ENCODE measurements at regions of chr4 and their contacts with region 1.

Region 1: DNA sequence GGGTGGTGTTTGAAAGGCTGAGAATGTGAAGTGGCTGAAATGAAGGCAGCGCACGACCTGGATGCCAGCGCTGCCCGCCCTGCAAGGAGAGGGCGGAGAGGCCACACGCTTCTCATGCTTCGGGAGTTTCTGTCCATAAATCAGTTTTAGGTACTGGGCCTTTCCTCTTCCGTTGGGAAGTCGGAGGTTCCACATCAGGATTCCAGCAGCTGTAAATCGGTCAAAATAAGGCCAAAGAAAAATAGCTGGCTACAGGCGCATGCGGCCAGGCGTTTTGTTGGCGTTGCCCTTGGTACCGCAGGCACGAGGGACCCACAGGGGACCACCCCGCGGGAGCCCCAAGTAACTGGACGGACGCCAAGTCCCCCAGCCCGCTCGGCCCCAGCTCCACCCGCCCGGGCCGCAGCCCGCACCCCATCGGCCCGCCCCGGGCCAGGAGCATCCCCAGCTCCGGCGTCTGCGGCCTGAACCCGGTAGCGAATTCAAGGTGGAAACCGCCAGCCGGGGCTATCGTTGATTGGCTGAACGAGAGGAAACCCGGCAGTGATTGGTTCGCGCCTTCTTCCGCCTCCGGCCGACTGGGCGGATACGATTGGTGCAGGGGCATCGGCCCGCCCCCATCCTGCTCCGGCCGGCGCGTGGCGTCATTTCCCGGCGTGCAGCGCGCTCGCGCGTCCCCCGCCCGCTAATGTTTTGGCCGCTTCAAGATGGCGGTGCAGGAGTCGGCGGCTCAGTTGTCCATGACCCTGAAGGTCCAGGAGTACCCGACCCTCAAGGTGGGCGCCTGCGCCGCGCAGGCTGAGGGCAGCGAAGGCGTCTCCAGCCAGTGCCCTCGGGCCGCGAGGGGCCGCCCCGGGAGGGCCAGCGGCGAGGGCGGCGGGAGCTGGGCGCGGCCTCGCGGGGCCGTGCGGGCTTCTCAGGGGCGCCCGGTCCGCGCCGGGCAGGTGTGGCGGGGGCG is at the start of gene MAEA:
- DNase-seq: peak; percentile 97 to 98
- ATAC-seq: peak; percentile 98 to 99 (median 99)
- H3K4me3 ChIP-seq: peak within 1 kb of the TSS; percentile 98
- H3K27ac ChIP-seq: peak within 1 kb of the TSS; percentile 95
- H3K4me1 ChIP-seq: peaks cover 26% of the 10 kb centered on the region
- H3K27me3 ChIP-seq: no peaks in the 10 kb centered on the region
- CTCF ChIP-seq: no peak
- total RNA-seq, gene MAEA: 26.7 to 39.6 (median 33.2) TPM

Region 2: DNA sequence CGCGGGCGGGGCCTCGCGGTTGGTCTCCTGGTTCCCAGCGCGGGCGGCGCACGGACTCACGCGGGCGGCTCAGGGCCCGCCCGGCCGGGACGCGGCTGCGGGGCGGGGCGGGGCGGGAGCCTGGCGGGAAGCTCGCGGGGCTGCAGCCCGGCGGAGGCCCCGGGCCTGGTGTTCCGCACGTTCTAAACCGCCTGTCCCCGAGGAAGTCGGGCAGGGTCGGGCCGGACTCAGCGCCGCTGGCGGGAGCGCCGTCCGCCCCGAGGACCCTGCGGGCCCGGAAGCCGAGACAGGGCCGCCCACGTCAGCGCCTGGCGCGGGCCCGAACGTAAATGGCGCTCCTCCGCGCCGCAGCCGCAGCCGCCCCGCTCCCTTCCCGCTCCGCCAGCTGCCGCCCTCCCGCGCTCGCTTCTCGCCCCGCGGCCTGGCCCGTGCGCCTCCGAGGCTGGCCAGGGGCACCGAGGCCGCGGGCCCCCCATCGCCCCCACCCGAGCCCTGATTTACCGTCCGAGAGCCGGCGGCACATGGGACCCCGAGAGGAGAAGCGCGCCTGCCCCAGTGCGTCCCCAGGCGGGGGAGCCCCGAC is 40.2 kb before region 1 on chr4:
- intact Hi-C with region 1: loop called in 1 of 2 experiments (anchors 5 kb)
- DNase-seq: peak; percentile 90 to 93
- ATAC-seq: peak; percentile 69 to 74 (median 70)
- H3K4me3 ChIP-seq: peak overlapping the region; percentile 87
- H3K27ac ChIP-seq: peak overlapping the region; percentile 93
- H3K4me1 ChIP-seq: peaks cover 61% of the 10 kb centered on the region
- H3K27me3 ChIP-seq: no peaks in the 10 kb centered on the region
- CTCF ChIP-seq: no peak

Measured in psoas muscle (tissue), 8 donors.